IMR-90 (cell line): ENCODE measurements at regions of chr13 and their contacts with region 1.

Region 1: DNA sequence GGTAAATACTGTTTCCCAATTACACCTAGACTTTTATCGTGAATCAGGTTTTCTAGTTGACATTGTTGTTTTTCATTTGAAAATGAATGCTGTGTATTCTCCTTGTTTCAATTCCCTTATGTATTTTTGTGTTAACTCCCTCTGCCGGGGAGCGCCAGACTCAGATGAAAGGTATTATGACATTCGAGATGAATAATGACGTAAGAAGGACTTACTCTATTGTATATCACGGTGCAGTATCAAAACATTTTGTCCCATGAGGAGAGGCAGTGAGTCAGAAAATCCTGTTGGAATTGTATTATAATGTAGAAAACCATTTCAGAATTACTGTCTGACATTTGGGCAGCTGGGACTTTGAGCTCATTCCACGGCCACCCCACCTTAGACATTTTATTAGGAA is 61.6 kb downstream of the LRCH1 start:
- DNase-seq: peak; percentile 93
- ATAC-seq: peak; percentile 44; the same call in 1 of the 2 replicates
- H3K4me3 ChIP-seq: no peak overlapping the region
- H3K27ac ChIP-seq: no peak overlapping the region
- H3K4me1 ChIP-seq: peaks cover 16% of the 10 kb centered on the region
- H3K27me3 ChIP-seq: no peaks in the 10 kb centered on the region
- CTCF ChIP-seq: peak; percentile 42
- POLR2A ChIP-seq: no peak
- RAD21 ChIP-seq: no peak; the same call in 1 of the 2 replicates

Region 2: GRCh38 chr13:45700971-45701900 is 913.3 kb before region 1 on chr13:
- CTCF ChIA-PET with region 1: no interaction called
- POLR2A ChIA-PET with region 1: no interaction called
- dilution Hi-C with region 1: no loop called
- in situ Hi-C with region 1: no loop called
- intact Hi-C with region 1: no loop called
- DNase-seq: no peak
- ATAC-seq: no peak
- H3K4me3 ChIP-seq: no peak overlapping the region
- H3K27ac ChIP-seq: no peak overlapping the region
- H3K4me1 ChIP-seq: no peaks in the 10 kb centered on the region
- H3K27me3 ChIP-seq: peaks cover 4% of the 10 kb centered on the region
- CTCF ChIP-seq: no peak
- POLR2A ChIP-seq: no peak
- RAD21 ChIP-seq: no peak

Region 3: DNA sequence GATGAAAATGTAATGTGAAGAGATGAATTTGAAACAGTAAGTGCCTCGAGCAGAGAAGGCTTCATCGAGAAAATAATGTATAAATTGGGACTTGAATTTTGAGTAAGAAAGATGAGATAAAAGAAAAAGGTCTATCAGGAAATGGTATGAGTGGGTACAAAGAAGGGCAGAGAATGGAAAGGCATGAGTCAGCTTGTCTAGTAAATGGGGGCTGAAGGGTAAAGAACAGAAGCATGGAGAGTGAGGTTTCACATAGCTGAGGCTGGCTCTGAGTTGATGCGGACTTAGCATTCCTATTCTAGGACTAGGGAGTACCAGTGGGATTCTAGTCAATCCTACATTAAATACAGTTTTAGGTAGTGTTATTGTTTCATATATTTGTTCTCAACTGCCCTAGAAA is 647.9 kb before region 1 on chr13:
- CTCF ChIA-PET with region 1: no interaction called
- POLR2A ChIA-PET with region 1: no interaction called
- dilution Hi-C with region 1: no loop called
- in situ Hi-C with region 1: no loop called
- intact Hi-C with region 1: no loop called
- DNase-seq: no peak
- ATAC-seq: no peak
- H3K4me3 ChIP-seq: no peak overlapping the region
- H3K27ac ChIP-seq: no peak overlapping the region
- H3K4me1 ChIP-seq: no peaks in the 10 kb centered on the region
- H3K27me3 ChIP-seq: no peaks in the 10 kb centered on the region
- CTCF ChIP-seq: no peak
- POLR2A ChIP-seq: no peak
- RAD21 ChIP-seq: no peak

Region 4: GRCh38 chr13:46492946-46493345 is 121.6 kb before region 1 on chr13:
- CTCF ChIA-PET with region 1: no interaction called
- POLR2A ChIA-PET with region 1: no interaction called
- dilution Hi-C with region 1: no loop called
- in situ Hi-C with region 1: no loop called
- intact Hi-C with region 1: loop called (anchors 5 kb)
- DNase-seq: peak; percentile 48
- ATAC-seq: peak; percentile 60
- H3K4me3 ChIP-seq: no peak overlapping the region
- H3K27ac ChIP-seq: no peak overlapping the region
- H3K4me1 ChIP-seq: peaks cover 2% of the 10 kb centered on the region; the same call in 1 of the 2 replicates
- H3K27me3 ChIP-seq: peaks cover 2% of the 10 kb centered on the region
- CTCF ChIP-seq: peak; percentile 68
- POLR2A ChIP-seq: no peak
- RAD21 ChIP-seq: peak; percentile 80

Region 5: DNA sequence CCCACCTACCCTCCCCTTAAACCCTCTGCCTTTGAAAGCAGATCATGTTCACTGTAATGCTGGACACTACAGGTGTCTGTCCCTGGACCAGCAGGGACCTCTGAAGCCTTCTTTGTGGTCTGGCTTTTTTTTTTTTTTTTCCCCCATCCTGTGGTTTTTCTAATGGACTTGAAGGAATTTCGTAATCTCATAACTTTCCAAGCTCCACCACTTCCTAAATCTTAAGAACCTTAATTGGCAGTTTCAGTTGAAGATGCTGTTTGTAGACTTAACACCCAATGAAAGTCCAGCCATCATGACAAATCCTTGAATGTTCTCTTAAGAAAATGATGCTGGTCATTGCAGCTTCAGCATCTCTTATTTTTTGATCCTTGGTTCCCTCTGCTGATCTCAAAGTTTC is 106.6 kb before region 1 on chr13:
- CTCF ChIA-PET with region 1: no interaction called
- POLR2A ChIA-PET with region 1: no interaction called
- dilution Hi-C with region 1: no loop called
- in situ Hi-C with region 1: no loop called
- intact Hi-C with region 1: no loop called
- DNase-seq: no peak
- ATAC-seq: no peak
- H3K4me3 ChIP-seq: no peak overlapping the region
- H3K27ac ChIP-seq: no peak overlapping the region
- H3K4me1 ChIP-seq: no peaks in the 10 kb centered on the region
- H3K27me3 ChIP-seq: peaks cover 7% of the 10 kb centered on the region; the same call in 1 of the 2 replicates
- CTCF ChIP-seq: no peak
- POLR2A ChIP-seq: no peak
- RAD21 ChIP-seq: no peak

Region 6: DNA sequence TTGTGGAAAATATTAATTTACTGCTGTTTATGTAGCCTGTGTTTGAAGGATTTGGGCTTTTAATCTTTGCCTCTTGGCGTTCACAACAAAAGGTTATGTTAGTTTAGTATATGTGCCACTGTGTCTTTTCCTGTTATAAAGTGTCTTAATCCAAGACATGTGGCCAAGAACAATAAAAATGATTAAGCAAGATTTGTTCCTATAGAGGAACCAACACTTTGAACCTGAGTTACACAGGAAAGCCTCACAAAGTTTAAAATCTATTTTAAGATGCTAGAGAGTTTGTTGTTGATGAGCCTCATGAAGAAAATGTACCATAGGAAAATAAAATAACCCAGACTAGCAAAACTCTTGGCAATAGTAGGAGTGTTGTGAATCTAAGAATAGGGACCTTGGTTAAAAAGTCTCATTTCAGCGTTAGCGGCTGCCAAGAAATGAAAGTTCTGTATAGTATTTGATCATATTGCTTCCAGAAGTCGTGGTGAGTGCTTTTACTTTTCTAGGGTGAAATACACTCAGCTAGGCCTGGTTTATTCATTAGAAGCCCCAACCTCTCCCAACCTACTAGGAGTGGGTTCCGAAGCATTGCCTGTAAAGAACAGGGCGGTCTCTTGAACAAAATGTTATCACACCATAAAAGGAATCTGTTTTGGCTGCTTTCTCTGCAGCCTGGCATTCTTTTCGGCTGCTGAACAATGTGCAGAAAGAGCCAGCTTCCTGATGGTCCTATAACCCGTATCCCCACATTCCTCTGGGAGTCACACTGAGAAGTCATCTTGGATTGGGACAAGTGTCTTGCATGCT is 41.0 kb after region 1 on chr13:
- CTCF ChIA-PET with region 1: no interaction called
- POLR2A ChIA-PET with region 1: no interaction called
- dilution Hi-C with region 1: no loop called
- in situ Hi-C with region 1: no loop called
- intact Hi-C with region 1: no loop called
- DNase-seq: no peak
- ATAC-seq: peak; percentile 59
- H3K4me3 ChIP-seq: no peak overlapping the region
- H3K27ac ChIP-seq: peak overlapping the region; percentile 71
- H3K4me1 ChIP-seq: peaks cover 4% of the 10 kb centered on the region
- H3K27me3 ChIP-seq: no peaks in the 10 kb centered on the region
- CTCF ChIP-seq: no peak
- POLR2A ChIP-seq: no peak
- RAD21 ChIP-seq: no peak

Region 7: GRCh38 chr13:46668302-46668720 is 53.7 kb after region 1 on chr13:
- CTCF ChIA-PET with region 1: no interaction called
- POLR2A ChIA-PET with region 1: no interaction called
- dilution Hi-C with region 1: no loop called
- in situ Hi-C with region 1: no loop called
- intact Hi-C with region 1: loop called (anchors 5 kb)
- DNase-seq: peak; percentile 95
- ATAC-seq: peak; percentile 85
- H3K4me3 ChIP-seq: peak overlapping the region; percentile 50; the same call in 1 of the 2 replicates
- H3K27ac ChIP-seq: peak overlapping the region; percentile 71; the same call in 1 of the 2 replicates
- H3K4me1 ChIP-seq: peaks cover 10% of the 10 kb centered on the region
- H3K27me3 ChIP-seq: no peaks in the 10 kb centered on the region
- CTCF ChIP-seq: no peak
- POLR2A ChIP-seq: no peak
- RAD21 ChIP-seq: no peak

Region 8: DNA sequence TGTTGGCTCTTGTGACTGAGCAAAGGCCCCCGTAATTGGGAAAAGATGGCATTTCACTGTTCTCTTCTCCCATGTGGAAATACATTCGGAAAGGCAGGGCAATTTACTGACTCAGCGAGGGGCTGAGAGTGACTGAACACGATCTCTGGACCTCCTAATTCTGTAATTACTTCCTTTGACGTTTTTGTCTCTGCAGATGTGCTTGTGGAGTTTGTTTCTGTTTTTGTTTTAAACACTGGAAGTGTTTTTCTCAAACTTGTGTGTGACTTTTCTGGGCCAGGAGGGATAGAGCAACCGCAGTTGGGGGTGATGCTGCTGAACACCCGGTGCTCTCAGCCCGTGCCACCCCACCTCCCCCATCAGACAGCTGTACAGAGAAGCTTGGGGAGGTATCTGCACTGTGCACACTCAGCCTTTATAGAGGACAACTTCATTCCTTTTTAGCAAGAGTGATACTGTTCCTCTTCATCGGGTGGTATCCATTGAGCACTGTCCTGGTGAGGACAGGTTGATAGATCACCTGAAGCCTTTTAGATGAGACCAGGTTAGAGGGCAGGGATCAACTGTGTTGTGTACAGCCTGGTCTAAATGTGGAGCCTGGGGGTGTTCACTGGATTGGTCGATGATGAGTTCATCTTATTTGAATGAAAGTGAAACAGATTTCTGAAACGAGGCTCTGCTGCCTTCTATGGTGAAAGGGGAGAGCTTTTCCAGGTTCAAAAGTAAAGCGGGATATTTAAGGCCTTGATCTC is 65.0 kb after region 1 on chr13:
- CTCF ChIA-PET with region 1: no interaction called
- POLR2A ChIA-PET with region 1: no interaction called
- dilution Hi-C with region 1: no loop called
- in situ Hi-C with region 1: no loop called
- intact Hi-C with region 1: loop called (anchors 5 kb)
- DNase-seq: peak; percentile 70
- ATAC-seq: peak; percentile 78
- H3K4me3 ChIP-seq: peak overlapping the region; percentile 42; the same call in 1 of the 2 replicates
- H3K27ac ChIP-seq: peak overlapping the region; percentile 46; the same call in 1 of the 2 replicates
- H3K4me1 ChIP-seq: peaks cover 9% of the 10 kb centered on the region
- H3K27me3 ChIP-seq: no peaks in the 10 kb centered on the region
- CTCF ChIP-seq: peak; percentile 24
- POLR2A ChIP-seq: no peak
- RAD21 ChIP-seq: no peak; the same call in 1 of the 2 replicates